ENCODE measurements at regions of chr3 and their contacts with region 1.

Region 1: GRCh38 chr3:59212128-59212779 is 162.4 kb upstream of the CFAP20DC start:
- DNase-seq: peak in 2 of 9 experiments; percentile 49 to 62
- ATAC-seq: no peak
- H3K4me3 ChIP-seq: no peak overlapping the region
- H3K4me3 Mint-ChIP-seq: no peak overlapping the region
- H3K27ac ChIP-seq: no peak overlapping the region
- H3K27ac Mint-ChIP-seq: no peak overlapping the region
- H3K4me1 ChIP-seq: no peaks in the 10 kb centered on the region
- H3K4me1 Mint-ChIP-seq: peaks cover 3% of the 10 kb centered on the region
- H3K27me3 ChIP-seq: no peaks in the 10 kb centered on the region
- H3K27me3 Mint-ChIP-seq: no peaks in the 10 kb centered on the region
- CTCF ChIP-seq: peak; percentile 79

Region 2: DNA sequence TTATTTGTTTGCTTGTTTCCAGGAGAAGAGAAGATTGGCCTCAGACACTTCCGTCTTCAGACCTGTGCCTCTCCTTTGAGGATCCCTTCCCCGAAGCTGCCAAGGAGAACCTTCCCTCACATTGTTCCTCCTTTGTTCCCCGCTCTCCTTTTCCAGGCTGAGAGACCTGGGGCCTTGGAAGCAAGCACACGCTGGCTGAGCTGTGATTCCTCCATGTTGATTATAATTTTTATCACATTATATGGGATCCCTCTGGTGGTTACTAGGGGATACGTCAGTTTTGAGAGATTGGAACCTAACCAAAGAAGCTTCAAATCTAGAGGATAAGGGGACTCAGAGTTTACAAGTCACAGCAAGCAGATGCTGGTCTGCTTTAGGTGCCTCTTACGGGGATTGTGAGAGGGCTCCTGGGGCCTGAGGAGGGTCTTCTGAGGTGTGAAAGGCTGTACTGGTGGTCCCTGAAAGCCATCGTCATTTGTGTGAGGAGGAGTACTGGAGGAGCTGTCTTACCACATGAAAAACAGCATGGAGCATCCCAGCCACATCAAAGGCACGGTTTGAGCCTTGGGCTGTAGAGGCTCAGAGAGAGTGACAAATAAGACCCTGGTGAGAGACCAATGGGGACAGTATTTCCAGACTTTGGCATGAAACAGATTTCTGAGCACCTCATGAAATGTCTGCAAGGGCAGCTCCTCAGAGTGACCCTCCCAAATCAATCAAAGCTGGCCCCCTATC is 597.6 kb after region 1 on chr3:
- CTCF ChIA-PET with region 1: interaction called, 7 read pairs
- POLR2A ChIA-PET with region 1: no interaction called
- intact Hi-C with region 1: loop called (anchors 1 kb)
- DNase-seq: peak in 2 of 9 experiments; percentile 23 to 40
- ATAC-seq: peak; percentile 36
- H3K4me3 ChIP-seq: no peak overlapping the region
- H3K4me3 Mint-ChIP-seq: no peak overlapping the region
- H3K27ac ChIP-seq: no peak overlapping the region
- H3K27ac Mint-ChIP-seq: no peak overlapping the region
- H3K4me1 ChIP-seq: no peaks in the 10 kb centered on the region
- H3K4me1 Mint-ChIP-seq: peaks cover 11% of the 10 kb centered on the region
- H3K27me3 ChIP-seq: no peaks in the 10 kb centered on the region
- H3K27me3 Mint-ChIP-seq: no peaks in the 10 kb centered on the region
- CTCF ChIP-seq: no peak

Region 3: GRCh38 chr3:60064210-60065178 is 852.2 kb after region 1 on chr3:
- CTCF ChIA-PET with region 1: no interaction called
- POLR2A ChIA-PET with region 1: no interaction called
- intact Hi-C with region 1: loop called in 1 of 2 experiments (anchors 5 kb)
- DNase-seq: peak in 3 of 9 experiments; percentile 19 to 49 (median 21)
- ATAC-seq: peak; percentile 57
- H3K4me3 ChIP-seq: no peak overlapping the region
- H3K4me3 Mint-ChIP-seq: no peak overlapping the region
- H3K27ac ChIP-seq: peak overlapping the region in 1 of 2 experiments; percentile 49
- H3K27ac Mint-ChIP-seq: peak overlapping the region; percentile 84
- H3K4me1 ChIP-seq: peaks cover 33% of the 10 kb centered on the region
- H3K4me1 Mint-ChIP-seq: peaks cover 50% of the 10 kb centered on the region
- H3K27me3 ChIP-seq: no peaks in the 10 kb centered on the region
- H3K27me3 Mint-ChIP-seq: no peaks in the 10 kb centered on the region
- CTCF ChIP-seq: no peak

Region 4: GRCh38 chr3:60954048-60954447 is 1741.8 kb after region 1 on chr3:
- CTCF ChIA-PET with region 1: no interaction called
- POLR2A ChIA-PET with region 1: no interaction called
- intact Hi-C with region 1: loop called in 1 of 2 experiments (anchors 5 kb)
- DNase-seq: no peak
- ATAC-seq: no peak
- H3K4me3 ChIP-seq: no peak overlapping the region
- H3K4me3 Mint-ChIP-seq: no peak overlapping the region
- H3K27ac ChIP-seq: no peak overlapping the region
- H3K27ac Mint-ChIP-seq: no peak overlapping the region
- H3K4me1 ChIP-seq: no peaks in the 10 kb centered on the region
- H3K4me1 Mint-ChIP-seq: no peaks in the 10 kb centered on the region
- H3K27me3 ChIP-seq: no peaks in the 10 kb centered on the region
- H3K27me3 Mint-ChIP-seq: no peaks in the 10 kb centered on the region
- CTCF ChIP-seq: no peak